Left cardiac atrium (tissue), 4 donors: ENCODE measurements at regions of chr2 and their contacts with region 1.

Region 1: GRCh38 chr2:27489498-27490397 is at the start of gene IFT172:
- DNase-seq: peak; percentile 100
- ATAC-seq: peak; percentile 96 to 99
- total RNA-seq, gene IFT172: 19.0 to 20.5 TPM

Region 2: GRCh38 chr2:27552941-27553340 is 63.2 kb after region 1 on chr2:
- intact Hi-C with region 1: no loop called
- DNase-seq: no peak
- ATAC-seq: no peak

Region 3: DNA sequence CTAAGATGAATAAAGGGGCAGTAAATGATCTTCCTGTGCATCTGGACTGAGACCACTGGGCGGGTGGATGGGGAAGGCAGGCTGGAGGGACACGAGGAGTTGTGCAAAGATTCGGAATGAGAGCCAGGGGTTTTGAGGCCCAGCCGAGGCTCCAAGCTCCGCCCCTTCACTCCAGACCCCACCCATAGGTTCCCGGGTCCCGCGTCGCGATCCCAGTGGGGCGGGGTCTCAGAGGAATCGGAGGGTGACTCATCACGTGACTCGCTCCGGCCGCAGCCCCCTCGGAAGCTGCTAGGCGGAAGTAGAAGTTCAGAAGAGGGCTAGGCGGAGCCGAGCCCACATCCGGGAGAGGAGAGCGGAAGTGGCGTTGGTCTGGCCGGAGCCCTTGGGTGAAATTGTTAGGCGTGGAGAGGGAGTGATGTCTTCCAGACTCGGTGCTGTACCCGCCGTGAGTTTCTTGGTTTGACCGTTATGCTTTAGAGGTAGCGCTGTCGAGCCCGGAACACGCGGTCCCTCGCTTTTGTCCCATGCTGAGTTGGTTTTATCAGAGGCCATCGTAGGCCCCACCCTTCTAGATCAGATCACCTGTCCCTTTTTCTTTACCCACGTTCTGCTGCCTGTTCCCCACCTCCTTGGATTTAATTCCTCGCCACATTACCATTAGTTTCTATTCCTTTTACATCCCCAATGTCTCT is 93.1 kb after region 1 on chr2 and contains the start of gene ZNF512:
- intact Hi-C with region 1: loop called in 1 of 2 experiments (anchors 10 kb)
- DNase-seq: peak; percentile 95
- ATAC-seq: peak; percentile 98 to 99
- total RNA-seq, gene ZNF512: 20.0 to 20.8 TPM